Activated CD4-positive, alpha-beta T cell treated with anti-CD3 and anti-CD28 coated beads, Interleukin-2, amount 10 ng/mL, durations not matched to agents 24 days and 14 days (primary cell): ENCODE measurements at regions of chr3 and their contacts with region 1.

Region 1: DNA sequence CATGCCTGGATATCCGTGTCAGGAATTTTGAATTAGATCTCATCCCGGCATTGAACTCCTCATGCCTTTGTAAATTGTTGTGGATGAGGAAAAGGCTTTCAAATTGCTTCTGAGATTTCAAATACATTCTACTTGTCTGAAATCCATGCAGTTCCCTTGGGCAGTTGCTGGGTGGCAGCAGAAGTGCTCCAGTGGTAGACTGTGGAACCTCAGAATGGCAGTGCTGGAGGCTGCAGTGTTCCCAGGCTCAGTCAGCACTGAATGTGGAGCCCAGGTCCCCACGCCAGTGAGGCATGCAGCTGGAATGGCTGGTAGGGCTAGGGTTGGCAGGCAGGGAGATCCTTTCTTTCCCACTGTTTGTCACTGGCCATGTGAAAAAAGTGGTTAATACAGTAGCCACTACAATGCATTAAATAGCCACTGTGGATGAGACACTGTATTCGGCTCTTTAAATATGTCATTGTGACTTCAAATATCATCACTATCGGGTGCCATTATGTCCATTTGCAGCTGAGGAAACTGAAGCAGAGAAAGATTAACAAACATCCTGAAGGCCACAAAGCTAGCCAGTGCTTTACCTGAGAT is 98.6 kb downstream of the TPRG1 start:
- DNase-seq: peak; percentile 83
- H3K4me3 Mint-ChIP-seq: no peak overlapping the region
- H3K27ac Mint-ChIP-seq: no peak overlapping the region
- H3K4me1 Mint-ChIP-seq: peaks cover 18% of the 10 kb centered on the region
- H3K27me3 Mint-ChIP-seq: peaks cover 2% of the 10 kb centered on the region

Region 2: GRCh38 chr3:187878776-187879518 is 1391.4 kb before region 1 on chr3:
- intact Hi-C with region 1: no loop called
- DNase-seq: no peak
- H3K4me3 Mint-ChIP-seq: no peak overlapping the region
- H3K27ac Mint-ChIP-seq: no peak overlapping the region
- H3K4me1 Mint-ChIP-seq: peaks cover 4% of the 10 kb centered on the region
- H3K27me3 Mint-ChIP-seq: peaks cover 4% of the 10 kb centered on the region

Region 3: DNA sequence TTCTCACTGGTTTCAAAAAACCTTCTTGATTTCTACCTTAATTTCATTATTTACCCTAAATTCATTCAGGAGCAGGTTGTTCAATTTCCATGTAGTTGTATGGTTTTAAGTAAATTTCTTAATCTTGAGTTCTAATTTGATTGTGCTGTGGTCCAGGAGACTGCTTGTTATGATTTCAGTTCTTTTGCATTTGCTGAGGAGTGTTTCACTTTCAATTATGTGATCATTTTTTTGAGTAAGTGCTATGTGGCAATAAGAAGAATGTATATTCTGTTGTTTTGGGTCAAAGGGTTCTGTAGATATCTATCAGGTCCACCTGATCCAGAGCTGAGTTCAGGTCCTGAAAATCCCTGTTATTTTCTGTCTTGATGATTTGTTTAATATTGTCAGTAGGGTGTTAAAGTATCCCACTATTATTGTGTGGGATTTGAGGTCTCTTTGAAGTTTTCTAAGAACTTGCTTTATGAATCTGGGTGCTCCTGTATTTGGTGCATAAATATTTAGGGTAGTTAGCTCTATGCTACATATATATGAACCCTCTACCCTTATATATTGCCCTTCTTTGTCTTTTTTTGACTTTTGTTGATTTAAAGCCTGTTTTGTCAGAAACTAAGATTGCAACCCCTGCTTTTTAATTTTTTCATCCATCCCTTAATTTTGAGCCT is 257.0 kb before region 1 on chr3:
- intact Hi-C with region 1: no loop called
- DNase-seq: no peak
- H3K4me3 Mint-ChIP-seq: no peak overlapping the region
- H3K27ac Mint-ChIP-seq: peak overlapping the region; percentile 25
- H3K4me1 Mint-ChIP-seq: peaks cover 21% of the 10 kb centered on the region
- H3K27me3 Mint-ChIP-seq: peaks cover 15% of the 10 kb centered on the region

Region 4: DNA sequence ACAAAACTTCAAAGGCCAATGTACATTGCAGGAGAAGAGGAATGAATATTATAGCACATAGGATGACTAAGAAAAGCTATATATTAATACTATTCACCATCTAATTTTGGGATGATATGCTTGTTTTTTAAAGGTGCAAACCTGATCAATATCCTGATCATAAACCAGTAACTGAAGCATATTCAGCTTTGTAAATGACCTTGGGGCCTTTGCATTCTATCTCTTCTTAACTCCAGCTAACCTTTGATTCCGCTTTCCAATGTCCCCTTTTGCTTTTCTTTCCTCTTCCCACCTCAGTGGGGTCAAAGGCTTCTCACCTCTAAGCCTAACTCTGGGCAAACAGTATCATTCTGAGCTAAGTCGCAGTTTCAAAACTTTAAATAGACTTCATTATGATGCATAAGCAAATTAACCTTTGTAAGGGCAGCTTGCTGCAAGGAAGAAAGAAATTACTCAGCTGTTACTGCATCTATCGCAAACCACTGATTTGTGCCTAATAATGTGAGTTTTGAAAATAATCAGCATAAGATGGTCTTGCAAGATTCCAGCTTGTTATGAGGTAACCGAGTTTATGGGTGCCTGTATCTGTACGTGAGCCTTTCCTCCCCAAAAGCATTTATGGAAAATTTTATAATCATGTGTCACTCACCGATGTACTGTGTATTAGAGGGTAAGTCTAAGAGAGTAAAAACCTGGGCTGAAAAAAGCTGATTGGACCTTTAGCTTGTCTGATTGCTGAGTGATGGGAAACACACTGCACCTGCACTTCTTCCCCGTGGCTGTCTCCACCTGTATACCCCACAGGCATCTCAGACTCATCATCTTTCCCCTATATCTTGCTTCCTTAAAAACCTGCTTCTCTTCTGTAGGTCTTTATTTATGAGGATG is 18.3 kb after region 1 on chr3:
- intact Hi-C with region 1: loop called (anchors 2 kb)
- DNase-seq: no peak
- H3K4me3 Mint-ChIP-seq: peak overlapping the region; percentile 6
- H3K27ac Mint-ChIP-seq: peak overlapping the region; percentile 70
- H3K4me1 Mint-ChIP-seq: peaks cover 26% of the 10 kb centered on the region
- H3K27me3 Mint-ChIP-seq: no peaks in the 10 kb centered on the region

Region 5: GRCh38 chr3:189529468-189529867 is 259.1 kb after region 1 on chr3:
- intact Hi-C with region 1: loop called (anchors 2 kb)
- DNase-seq: no peak
- H3K4me3 Mint-ChIP-seq: no peak overlapping the region
- H3K27ac Mint-ChIP-seq: peak overlapping the region; percentile 69
- H3K4me1 Mint-ChIP-seq: peaks cover 18% of the 10 kb centered on the region
- H3K27me3 Mint-ChIP-seq: no peaks in the 10 kb centered on the region

Region 6: DNA sequence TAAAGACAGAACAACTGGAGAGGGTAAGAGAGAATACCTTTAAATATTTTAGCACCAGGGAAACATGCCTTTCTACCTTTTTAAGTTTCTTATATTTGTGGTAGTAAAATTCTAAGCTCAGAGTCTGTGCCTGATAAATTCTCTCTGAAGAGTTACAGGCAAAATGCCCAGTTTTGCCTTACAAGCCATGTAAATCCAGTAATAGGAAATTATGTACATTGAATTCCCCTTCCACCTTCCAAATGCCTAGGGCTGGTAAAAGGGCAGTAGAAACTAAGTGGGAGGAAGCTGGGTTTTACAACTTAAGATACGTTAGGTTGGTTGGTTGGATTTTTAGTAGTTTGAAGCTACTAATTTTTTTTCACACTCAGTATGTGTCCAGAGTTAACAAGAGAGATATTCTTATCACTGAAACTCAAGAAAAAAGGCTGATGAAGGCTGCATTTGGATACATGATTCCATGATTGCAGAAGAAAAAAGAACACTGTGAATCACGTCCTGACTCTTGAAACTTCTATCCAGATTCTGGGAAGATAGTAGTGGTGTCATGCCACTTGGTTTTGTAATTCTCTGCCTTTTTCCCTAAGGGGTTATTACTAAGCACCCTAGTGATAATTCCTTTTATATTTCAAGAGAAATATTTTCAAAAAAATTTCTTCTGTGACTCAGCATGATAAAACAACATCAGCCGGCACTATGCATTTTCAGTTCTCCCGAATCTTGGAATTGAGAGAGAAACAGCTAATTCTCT is 317.9 kb after region 1 on chr3:
- intact Hi-C with region 1: loop called (anchors 5 kb)
- DNase-seq: no peak
- H3K4me3 Mint-ChIP-seq: no peak overlapping the region
- H3K27ac Mint-ChIP-seq: no peak overlapping the region
- H3K4me1 Mint-ChIP-seq: peaks cover 10% of the 10 kb centered on the region
- H3K27me3 Mint-ChIP-seq: peaks cover 1% of the 10 kb centered on the region

Region 7: DNA sequence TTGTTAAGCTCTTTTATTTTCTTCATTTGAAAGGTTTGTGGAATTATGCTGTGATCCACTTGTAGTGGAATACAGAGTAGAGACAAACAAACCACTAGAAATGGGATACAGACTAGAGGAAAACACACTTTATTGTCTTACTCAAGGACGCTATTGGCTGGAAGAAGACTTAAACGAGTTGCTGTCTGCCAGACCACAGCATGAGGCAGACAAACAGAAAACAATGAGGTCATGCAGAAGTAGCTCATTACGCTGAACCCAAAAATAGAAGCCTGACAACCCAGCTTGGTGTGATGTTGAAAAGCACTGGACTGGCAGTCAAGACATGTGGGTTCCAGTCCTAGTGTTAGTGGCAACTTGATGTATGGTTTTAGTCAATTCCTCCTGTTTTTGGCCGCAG is 912.8 kb after region 1 on chr3:
- intact Hi-C with region 1: loop called (anchors 10 kb)
- DNase-seq: no peak
- H3K4me3 Mint-ChIP-seq: no peak overlapping the region
- H3K27ac Mint-ChIP-seq: no peak overlapping the region
- H3K4me1 Mint-ChIP-seq: no peaks in the 10 kb centered on the region
- H3K27me3 Mint-ChIP-seq: no peaks in the 10 kb centered on the region